Breast epithelium (tissue), 4 donors: ENCODE measurements at regions of chr21 and their contacts with region 1.

Region 1: DNA sequence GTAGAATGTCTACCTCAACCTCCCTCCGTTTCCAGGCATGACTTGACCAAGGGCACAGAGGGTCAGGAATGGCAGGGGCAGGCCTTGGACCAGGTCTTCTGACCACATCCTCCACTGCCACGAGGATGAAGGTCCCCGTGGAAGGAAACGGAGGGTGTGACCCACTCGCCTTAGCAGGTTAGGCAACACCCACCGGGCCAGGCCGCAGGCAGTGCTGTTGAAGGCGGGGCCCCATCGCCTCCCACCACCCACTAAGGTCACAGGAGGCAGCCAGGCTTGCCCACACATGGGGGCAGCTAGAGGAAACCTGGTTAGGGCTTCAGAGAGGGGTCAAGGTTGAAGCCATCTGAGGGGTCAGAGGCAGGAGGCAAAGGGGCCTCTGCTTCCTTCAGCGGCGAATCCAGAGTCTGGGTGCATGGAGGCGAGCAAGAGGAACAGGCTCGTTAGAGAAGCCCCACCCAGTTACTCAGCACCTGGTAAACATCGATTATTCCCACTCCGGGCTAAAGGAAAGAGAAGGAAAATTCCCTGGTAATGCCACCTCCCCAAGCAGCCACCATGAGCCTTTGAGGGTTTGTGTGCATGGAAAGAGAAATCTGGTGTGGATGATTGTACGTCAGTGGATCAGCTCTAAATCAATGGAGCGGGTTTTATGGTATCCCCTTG is 37.0 kb downstream of the RIPK4 start:
- DNase-seq: no peak
- H3K4me3 ChIP-seq: no peak overlapping the region
- H3K27ac ChIP-seq: no peak overlapping the region
- H3K4me1 ChIP-seq: peaks cover 3 to 7% of the 10 kb centered on the region in 2 donors
- H3K27me3 ChIP-seq: no peaks in the 10 kb centered on the region
- CTCF ChIP-seq: no peak
- POLR2A ChIP-seq: no peak

Region 2: GRCh38 chr21:41753001-41753903 is 23.4 kb after region 1 on chr21:
- intact Hi-C with region 1: loop called (anchors 1 kb)
- DNase-seq: no peak
- H3K4me3 ChIP-seq: no peak overlapping the region
- H3K27ac ChIP-seq: no peak overlapping the region
- H3K4me1 ChIP-seq: peaks cover 0 to 13% of the 10 kb centered on the region in 2 donors
- H3K27me3 ChIP-seq: no peaks in the 10 kb centered on the region
- CTCF ChIP-seq: no peak
- POLR2A ChIP-seq: no peak